ENCODE measurements at regions of chr18 and their contacts with region 1.

Region 1: GRCh38 chr18:23849141-23849540 is 159.9 kb downstream of the LAMA3 start:
- DNase-seq: no peak
- ATAC-seq: no peak
- H3K4me3 ChIP-seq: no peak overlapping the region
- H3K4me3 Mint-ChIP-seq: no peak overlapping the region
- H3K27ac ChIP-seq: no peak overlapping the region
- H3K27ac Mint-ChIP-seq: peak overlapping the region in 3 of 9 donors; percentile 10 to 51 (median 38)
- H3K4me1 ChIP-seq: no peaks in the 10 kb centered on the region
- H3K4me1 Mint-ChIP-seq: peaks cover 4 to 26% (median 23%) of the 10 kb centered on the region in 7 donors
- H3K27me3 ChIP-seq: no peaks in the 10 kb centered on the region
- H3K27me3 Mint-ChIP-seq: peaks cover 0 to 9% (median 0%) of the 10 kb centered on the region in 5 donors

Region 2: DNA sequence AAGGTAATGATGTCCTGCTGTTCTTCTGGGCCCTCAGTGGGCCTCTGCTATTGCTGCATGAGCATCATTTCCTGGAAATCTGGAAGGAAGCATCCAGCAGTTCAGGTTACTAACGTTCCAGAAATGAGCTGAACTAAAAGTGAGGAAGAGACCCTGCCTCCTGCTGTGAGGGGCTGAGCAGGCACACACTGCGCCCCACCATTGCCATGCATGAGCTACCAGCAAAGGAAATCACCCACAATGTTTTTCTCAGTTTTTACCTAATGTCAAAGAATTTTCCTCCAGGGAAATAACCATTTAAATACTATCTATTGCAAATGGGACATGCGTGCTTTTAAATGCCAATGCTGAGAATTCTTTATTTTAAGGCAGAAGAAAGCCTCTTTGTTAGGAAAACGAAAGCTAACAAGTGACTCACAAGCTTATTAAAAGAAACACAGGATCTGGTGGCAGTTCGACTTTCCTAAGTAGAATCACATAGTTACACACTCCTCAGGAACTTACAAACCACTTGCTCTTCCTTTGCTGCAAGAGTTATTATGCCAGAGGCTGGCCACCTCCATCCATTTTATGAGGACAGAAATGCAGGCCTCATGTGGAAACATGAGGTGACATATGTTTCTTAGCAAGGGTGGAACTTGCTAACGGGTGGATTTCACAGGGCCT is 12.8 kb after region 1 on chr18:
- CTCF ChIA-PET with region 1: no interaction called
- POLR2A ChIA-PET with region 1: no interaction called
- intact Hi-C with region 1: loop called in 1 of 2 experiments (anchors 2 kb)
- DNase-seq: no peak
- ATAC-seq: no peak
- H3K4me3 ChIP-seq: no peak overlapping the region
- H3K4me3 Mint-ChIP-seq: no peak overlapping the region
- H3K27ac ChIP-seq: no peak overlapping the region
- H3K27ac Mint-ChIP-seq: peak overlapping the region in 8 of 9 donors; percentile 13 to 73 (median 60)
- H3K4me1 ChIP-seq: peaks cover 24 to 25% of the 10 kb centered on the region in 2 donors
- H3K4me1 Mint-ChIP-seq: peaks cover 26 to 58% (median 45%) of the 10 kb centered on the region in 7 donors
- H3K27me3 ChIP-seq: no peaks in the 10 kb centered on the region
- H3K27me3 Mint-ChIP-seq: no peaks in the 10 kb centered on the region

Region 3: DNA sequence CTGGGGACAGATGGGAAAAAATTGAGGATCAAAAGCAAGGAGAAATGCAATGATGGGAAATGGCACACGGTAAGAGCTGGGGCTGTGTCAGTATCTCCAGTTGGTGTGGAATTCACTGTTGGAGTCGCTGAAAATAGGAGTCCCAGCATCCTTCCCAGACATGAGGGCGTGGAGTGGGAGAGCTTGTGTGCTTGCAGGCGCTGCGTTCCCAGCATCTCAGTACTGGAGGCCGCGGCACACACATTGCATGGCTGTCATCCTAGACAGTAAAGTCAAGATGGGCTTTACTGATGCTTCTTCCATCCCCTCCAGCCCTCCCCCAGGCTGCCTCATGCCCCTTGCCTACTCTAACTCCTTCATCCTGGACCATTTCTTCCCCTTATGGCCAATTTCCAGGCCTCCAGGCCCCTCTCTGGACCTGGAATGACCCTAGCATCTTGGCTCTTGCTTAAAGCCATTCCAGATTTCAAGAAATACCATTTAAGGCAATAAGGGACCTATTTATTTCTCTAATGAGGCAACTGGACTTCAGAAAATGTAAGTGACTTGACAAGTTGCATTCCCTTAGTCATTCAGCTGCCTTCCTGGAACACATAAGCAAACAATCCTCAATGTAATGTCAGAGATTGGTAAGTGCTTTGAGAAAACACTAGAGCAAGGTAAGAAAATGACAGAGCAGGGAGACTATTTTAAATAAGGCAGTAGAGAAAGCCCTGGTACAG is 94.9 kb after region 1 on chr18:
- CTCF ChIA-PET with region 1: no interaction called
- POLR2A ChIA-PET with region 1: no interaction called
- intact Hi-C with region 1: no loop called
- DNase-seq: no peak
- ATAC-seq: no peak
- H3K4me3 ChIP-seq: no peak overlapping the region
- H3K4me3 Mint-ChIP-seq: peak overlapping the region in 2 of 10 donors; percentile 7 to 37
- H3K27ac ChIP-seq: no peak overlapping the region
- H3K27ac Mint-ChIP-seq: peak overlapping the region in 3 of 9 donors; percentile 6 to 46 (median 46)
- H3K4me1 ChIP-seq: peaks cover 0 to 14% of the 10 kb centered on the region in 2 donors
- H3K4me1 Mint-ChIP-seq: peaks cover 6 to 40% (median 35%) of the 10 kb centered on the region in 7 donors
- H3K27me3 ChIP-seq: no peaks in the 10 kb centered on the region
- H3K27me3 Mint-ChIP-seq: peaks cover 0 to 38% (median 0%) of the 10 kb centered on the region in 5 donors

Region 4: DNA sequence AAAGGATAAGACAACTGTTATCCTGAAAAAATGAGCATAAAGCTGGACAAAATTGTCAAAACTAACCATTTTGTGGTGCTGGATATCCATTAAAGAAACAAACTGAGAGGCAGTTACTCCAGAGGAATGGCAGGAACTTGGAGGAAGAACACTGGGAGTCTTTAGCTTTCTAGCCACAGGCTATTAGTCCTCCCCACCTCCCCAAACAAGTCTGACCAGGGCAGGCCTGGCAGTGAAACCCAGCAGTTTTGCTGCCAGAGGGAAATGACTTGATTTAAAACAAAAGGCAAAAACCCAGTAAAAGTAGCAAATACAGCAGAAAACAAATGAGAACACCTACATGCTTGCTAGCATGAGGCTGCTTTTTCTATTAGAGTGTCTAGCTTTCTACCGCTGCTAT is 513.6 kb after region 1 on chr18:
- CTCF ChIA-PET with region 1: no interaction called
- POLR2A ChIA-PET with region 1: no interaction called
- intact Hi-C with region 1: no loop called
- DNase-seq: no peak
- ATAC-seq: no peak
- H3K4me3 ChIP-seq: no peak overlapping the region
- H3K4me3 Mint-ChIP-seq: no peak overlapping the region
- H3K27ac ChIP-seq: no peak overlapping the region
- H3K27ac Mint-ChIP-seq: no peak overlapping the region
- H3K4me1 ChIP-seq: no peaks in the 10 kb centered on the region
- H3K4me1 Mint-ChIP-seq: peaks cover 0 to 2% (median 0%) of the 10 kb centered on the region in 7 donors
- H3K27me3 ChIP-seq: no peaks in the 10 kb centered on the region
- H3K27me3 Mint-ChIP-seq: no peaks in the 10 kb centered on the region

Measured in naive thymus-derived CD4-positive, alpha-beta T cell (primary cell).